SK-N-SH (cell line): ENCODE measurements at regions of chr15 and their contacts with region 1.

Region 1: GRCh38 chr15:88246666-88247446 is 9.7 kb downstream of the NTRK3 start:
- DNase-seq: peak; percentile 89
- H3K4me3 ChIP-seq: peak overlapping the region in 1 of 2 experiments; percentile 61; a peak in 2 of 4 replicates
- H3K27ac ChIP-seq: no peak overlapping the region
- H3K4me1 ChIP-seq: peaks cover 0 to 8% of the 10 kb centered on the region in 2 experiments; a peak in 1 of 4 replicates
- H3K27me3 ChIP-seq: no peaks in the 10 kb centered on the region
- CTCF ChIP-seq: peak; percentile 93
- EP300 ChIP-seq: no peak
- RAD21 ChIP-seq: peak; percentile 87

Region 2: DNA sequence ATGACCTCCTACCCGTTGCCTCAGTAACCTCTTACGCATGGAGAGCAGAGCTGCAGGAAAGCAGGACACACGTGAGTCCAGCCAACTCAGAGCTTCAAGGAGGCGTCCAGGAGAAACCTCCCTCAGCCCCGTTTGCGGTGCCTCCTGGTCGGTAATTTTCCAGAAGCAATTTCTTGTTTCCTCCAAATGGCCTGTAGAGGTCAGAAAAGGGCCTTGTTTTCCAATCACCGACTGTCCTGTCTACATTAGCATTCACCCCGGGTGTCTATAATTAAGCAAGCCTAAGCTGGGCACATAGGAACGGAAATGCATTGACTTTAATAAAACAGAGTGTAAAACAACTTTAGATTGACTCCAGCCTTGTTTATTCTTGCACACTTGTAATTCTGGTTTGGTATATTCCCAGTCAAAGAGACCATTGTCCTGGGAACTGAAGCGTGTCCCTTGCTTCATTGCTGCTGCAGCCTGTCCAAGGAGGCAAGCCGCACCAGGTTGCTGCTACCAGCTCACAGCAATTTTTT is 1331.0 kb before region 1 on chr15:
- CTCF ChIA-PET with region 1: interaction called, 57 read pairs
- POLR2A ChIA-PET with region 1: no interaction called
- DNase-seq: peak; percentile 65
- H3K4me3 ChIP-seq: no peak overlapping the region
- H3K27ac ChIP-seq: no peak overlapping the region
- H3K4me1 ChIP-seq: no peaks in the 10 kb centered on the region; a peak in 1 of 4 replicates
- H3K27me3 ChIP-seq: no peaks in the 10 kb centered on the region
- CTCF ChIP-seq: peak; percentile 62
- EP300 ChIP-seq: no peak
- RAD21 ChIP-seq: peak; percentile 83

Region 3: DNA sequence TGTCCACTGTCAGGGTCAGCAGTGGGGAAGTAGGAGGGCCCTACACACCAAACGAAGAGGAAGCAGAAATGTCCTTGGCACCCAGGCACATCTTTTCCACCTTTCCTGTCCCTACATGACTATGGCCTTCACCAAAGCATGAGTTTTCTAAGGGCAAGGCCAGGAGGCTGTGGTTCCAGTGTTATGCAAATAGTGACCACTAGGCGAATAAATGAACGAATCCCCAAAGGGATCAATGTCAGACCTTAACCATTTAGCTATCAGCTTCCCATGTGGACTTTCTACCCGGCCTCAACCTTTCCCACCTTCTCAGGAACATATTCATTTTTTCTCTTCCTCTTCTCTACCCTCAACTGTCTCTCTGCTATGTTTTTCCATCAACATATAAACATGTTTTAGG is 53.4 kb before region 1 on chr15:
- CTCF ChIA-PET with region 1: interaction called, 32 read pairs
- POLR2A ChIA-PET with region 1: no interaction called
- DNase-seq: no peak
- H3K4me3 ChIP-seq: no peak overlapping the region
- H3K27ac ChIP-seq: no peak overlapping the region
- H3K4me1 ChIP-seq: peaks cover 0 to 17% of the 10 kb centered on the region in 2 experiments; a peak in 1 of 4 replicates
- H3K27me3 ChIP-seq: no peaks in the 10 kb centered on the region
- CTCF ChIP-seq: no peak; the same call in 1 of the 2 replicates
- EP300 ChIP-seq: no peak
- RAD21 ChIP-seq: no peak

Region 4: DNA sequence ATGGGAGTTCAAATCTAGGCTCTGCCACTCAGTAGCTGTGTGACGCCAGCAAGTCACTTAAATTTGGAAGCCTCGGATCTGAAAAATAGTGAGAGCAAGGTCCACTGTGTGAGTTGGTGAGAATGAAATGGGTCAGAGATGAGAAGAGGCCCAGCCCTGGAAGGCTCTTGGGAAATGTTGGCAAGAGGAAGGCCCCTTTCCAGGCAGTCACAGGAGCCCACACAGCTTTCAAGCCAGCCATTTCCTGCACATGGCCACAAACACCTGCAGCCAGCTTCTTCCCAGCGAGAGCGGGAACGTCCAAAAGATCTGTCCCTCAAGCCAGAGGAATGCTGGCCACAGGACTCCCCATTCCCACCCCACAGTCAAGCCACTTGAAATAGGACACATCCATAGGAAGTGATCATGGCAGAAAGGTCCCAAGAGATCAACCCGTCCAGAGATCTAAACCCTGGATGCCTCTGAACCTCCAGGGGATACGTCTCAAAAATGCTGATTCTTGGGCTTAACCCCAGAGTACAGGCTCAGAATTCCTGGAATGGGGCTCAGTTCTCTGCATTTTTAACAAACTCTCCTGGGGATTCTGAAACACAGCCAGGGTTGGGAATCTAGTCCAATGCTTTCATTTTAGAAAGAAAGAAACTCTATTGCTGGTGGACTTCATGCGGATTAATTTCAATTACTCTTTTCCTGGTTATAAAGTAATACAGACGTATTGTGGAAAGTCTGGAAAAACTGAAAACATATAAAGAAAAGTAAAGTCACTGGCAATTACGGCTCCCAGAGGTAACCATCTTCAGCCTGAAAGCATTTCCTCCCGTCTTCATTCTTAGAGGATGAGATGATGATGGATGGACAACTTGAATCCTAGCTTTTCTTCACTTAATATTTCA is 26.2 kb before region 1 on chr15:
- CTCF ChIA-PET with region 1: interaction called, 11 read pairs
- POLR2A ChIA-PET with region 1: no interaction called
- DNase-seq: no peak
- H3K4me3 ChIP-seq: no peak overlapping the region
- H3K27ac ChIP-seq: no peak overlapping the region
- H3K4me1 ChIP-seq: peaks cover 0 to 18% of the 10 kb centered on the region in 2 experiments; a peak in 1 of 4 replicates
- H3K27me3 ChIP-seq: no peaks in the 10 kb centered on the region
- CTCF ChIP-seq: no peak
- EP300 ChIP-seq: no peak
- RAD21 ChIP-seq: no peak

Region 5: GRCh38 chr15:88232801-88233201 is 14.1 kb before region 1 on chr15:
- CTCF ChIA-PET with region 1: interaction called, 41 read pairs
- POLR2A ChIA-PET with region 1: no interaction called
- DNase-seq: no peak
- H3K4me3 ChIP-seq: no peak overlapping the region
- H3K27ac ChIP-seq: no peak overlapping the region
- H3K4me1 ChIP-seq: no peaks in the 10 kb centered on the region
- H3K27me3 ChIP-seq: no peaks in the 10 kb centered on the region
- CTCF ChIP-seq: no peak
- EP300 ChIP-seq: no peak
- RAD21 ChIP-seq: no peak

Region 6: DNA sequence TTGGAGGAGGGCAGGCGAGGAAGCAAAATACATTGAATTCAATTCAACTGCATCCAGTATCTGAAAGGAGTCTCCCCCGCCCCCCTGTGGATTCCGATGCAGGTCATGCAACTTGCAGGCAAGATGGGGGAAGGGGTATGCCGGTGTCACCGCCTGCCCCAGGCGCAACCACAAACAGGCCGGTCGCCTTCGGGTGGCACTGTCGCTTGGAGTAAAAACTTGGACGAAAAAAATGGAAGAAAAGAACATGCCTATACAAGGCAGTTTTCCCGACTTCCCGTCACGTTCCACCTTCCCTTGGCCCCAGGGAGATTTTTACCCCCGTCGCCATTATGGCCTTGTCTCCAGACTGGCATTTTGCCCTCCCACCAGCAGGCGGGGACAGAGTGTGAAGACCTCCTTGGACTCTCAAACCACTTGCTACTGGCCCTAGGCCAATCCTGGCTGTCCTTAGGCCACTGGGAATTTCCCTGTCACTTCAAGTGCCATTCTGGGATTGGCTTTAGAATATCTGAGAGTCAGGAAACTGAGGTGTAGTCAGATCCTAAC is 11.3 kb after region 1 on chr15:
- CTCF ChIA-PET with region 1: interaction called, 54 read pairs
- POLR2A ChIA-PET with region 1: no interaction called
- DNase-seq: peak; percentile 66
- H3K4me3 ChIP-seq: peak overlapping the region in 1 of 2 experiments; percentile 64; a peak in 2 of 4 replicates
- H3K27ac ChIP-seq: no peak overlapping the region
- H3K4me1 ChIP-seq: peaks cover 0 to 18% of the 10 kb centered on the region in 2 experiments; a peak in 1 of 4 replicates
- H3K27me3 ChIP-seq: peaks cover 32% of the 10 kb centered on the region; the same call in 1 of the 2 replicates
- CTCF ChIP-seq: peak; percentile 38; the same call in 1 of the 2 replicates
- EP300 ChIP-seq: no peak
- RAD21 ChIP-seq: 0 out of 2 replicates have a peak, but pooled peaks have one; percentile 8

Region 7: DNA sequence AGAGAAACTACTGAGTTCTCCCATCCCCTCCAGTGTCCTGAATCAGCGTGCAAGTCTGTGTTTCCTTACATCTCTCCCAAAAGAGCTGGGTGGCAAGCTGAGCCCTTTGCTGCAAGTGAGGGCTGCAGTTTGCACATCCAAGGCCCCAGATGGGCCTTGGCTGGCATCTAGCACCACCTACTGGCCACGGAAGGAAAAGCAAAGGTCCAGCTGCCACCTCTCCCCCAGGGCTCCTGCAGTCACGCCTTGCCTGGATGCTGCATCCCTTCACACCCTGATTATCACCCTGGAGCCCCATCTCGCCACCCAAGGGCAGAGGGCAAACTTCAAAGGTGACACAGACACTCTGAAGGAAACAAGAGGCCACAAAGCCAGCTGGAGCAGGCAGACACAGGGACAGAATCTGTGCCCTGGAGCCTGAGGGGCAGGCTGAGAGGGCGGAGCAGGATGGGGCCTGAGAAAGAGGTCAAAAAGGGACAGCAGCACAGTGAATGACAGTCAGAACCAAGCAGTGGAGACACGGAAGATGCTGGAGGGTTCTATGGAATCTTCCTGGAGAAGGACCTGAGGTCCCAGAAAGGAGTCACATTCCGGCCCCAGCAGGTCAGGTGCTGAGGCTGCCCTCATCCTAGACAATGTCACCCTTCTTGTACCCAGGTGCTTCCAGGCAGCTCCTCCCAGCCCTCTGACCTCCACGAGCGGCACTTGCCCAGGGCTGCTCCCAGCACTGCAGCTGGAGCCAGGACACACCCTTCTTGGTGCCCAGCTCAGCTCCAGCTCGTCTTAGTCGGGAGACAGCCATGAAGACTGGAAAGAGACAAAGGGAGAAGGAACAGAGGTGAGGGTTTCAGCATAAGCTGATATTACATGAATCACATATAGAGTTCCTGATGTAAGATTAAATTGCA is 28.0 kb after region 1 on chr15:
- CTCF ChIA-PET with region 1: interaction called, 103 read pairs
- POLR2A ChIA-PET with region 1: no interaction called
- DNase-seq: peak; percentile 87
- H3K4me3 ChIP-seq: peak overlapping the region in 1 of 2 experiments; percentile 55; a peak in 1 of 4 replicates
- H3K27ac ChIP-seq: no peak overlapping the region
- H3K4me1 ChIP-seq: no peaks in the 10 kb centered on the region; a peak in 1 of 4 replicates
- H3K27me3 ChIP-seq: no peaks in the 10 kb centered on the region
- CTCF ChIP-seq: peak; percentile 81
- EP300 ChIP-seq: no peak
- RAD21 ChIP-seq: peak; percentile 90